ENCODE measurements at regions of chr1 and their contacts with region 1.

Region 1: DNA sequence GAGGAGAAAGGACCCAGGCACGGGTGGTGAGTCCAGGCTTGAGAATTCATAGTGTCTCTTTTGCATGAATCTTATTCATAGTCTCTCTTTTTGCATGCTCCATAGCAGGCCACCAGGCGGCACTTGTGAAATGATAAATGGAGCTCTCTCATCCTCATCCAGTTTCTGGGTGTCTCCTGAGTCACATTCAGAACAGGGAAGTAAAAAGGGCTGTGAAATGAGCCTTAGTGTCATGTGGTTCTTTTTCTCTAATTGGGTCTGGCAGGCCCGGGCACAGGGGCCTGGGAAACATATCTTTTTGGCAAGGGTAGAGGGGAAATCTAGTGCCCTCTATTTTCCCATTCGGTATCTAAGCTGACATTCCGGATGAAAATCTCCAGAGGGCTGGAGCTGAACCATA is 19.1 kb upstream of the NCF2 start:
- DNase-seq: no peak
- ATAC-seq: peak; percentile 62
- H3K4me3 ChIP-seq: no peak overlapping the region
- H3K27ac ChIP-seq: peak overlapping the region; percentile 53
- H3K4me1 ChIP-seq: peaks cover 46% of the 10 kb centered on the region
- H3K27me3 ChIP-seq: no peaks in the 10 kb centered on the region
- CTCF ChIP-seq: peak; percentile 69 to 76 (median 72)
- EP300 ChIP-seq: peak in 1 of 2 experiments; percentile 57; a peak in 1 of 4 replicates
- POLR2A ChIP-seq: no peak
- RAD21 ChIP-seq: peak; percentile 70

Region 2: DNA sequence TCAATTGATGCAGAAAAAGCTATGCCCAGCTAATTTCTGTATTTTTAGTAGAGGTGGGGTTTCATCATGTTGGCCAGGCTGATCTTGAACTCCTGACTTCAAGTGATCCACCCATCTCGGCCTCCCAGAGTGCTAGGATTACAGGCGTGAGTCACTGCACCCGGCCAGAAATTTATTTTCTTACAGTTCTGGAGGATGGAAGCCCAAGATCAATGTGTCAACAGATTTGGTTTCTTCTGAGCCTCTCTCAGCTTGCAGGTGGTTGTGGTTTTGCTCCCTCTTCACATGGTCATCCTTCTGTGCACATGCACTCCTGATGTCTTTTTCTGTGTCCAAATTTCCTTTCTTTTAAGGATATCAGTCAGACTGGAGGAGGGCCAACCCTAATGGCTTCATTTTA is 691.9 kb before region 1 on chr1:
- CTCF ChIA-PET with region 1: no interaction called
- POLR2A ChIA-PET with region 1: no interaction called
- RAD21 ChIA-PET with region 1: no interaction called
- SMC1A ChIA-PET with region 1: no interaction called
- in situ Hi-C with region 1: no loop called
- intact Hi-C with region 1: no loop called
- DNase-seq: no peak
- ATAC-seq: no peak
- H3K4me3 ChIP-seq: no peak overlapping the region
- H3K27ac ChIP-seq: no peak overlapping the region
- H3K4me1 ChIP-seq: no peaks in the 10 kb centered on the region
- H3K27me3 ChIP-seq: no peaks in the 10 kb centered on the region
- CTCF ChIP-seq: no peak
- EP300 ChIP-seq: no peak
- POLR2A ChIP-seq: no peak
- RAD21 ChIP-seq: no peak

Region 3: GRCh38 chr1:183471743-183472487 is 137.4 kb before region 1 on chr1:
- CTCF ChIA-PET with region 1: interaction called, 5 read pairs
- POLR2A ChIA-PET with region 1: interaction called, 5 read pairs
- RAD21 ChIA-PET with region 1: interaction called, 8 read pairs
- SMC1A ChIA-PET with region 1: interaction called, 6 read pairs
- in situ Hi-C with region 1: no loop called
- intact Hi-C with region 1: loop called (anchors 5 kb)
- DNase-seq: peak; percentile 90
- ATAC-seq: peak; percentile 69
- H3K4me3 ChIP-seq: peak overlapping the region; percentile 87
- H3K27ac ChIP-seq: peak overlapping the region; percentile 99
- H3K4me1 ChIP-seq: peaks cover 8% of the 10 kb centered on the region
- H3K27me3 ChIP-seq: no peaks in the 10 kb centered on the region
- CTCF ChIP-seq: peak in 2 of 3 experiments; percentile 21 to 38; a peak in 3 of 6 replicates
- EP300 ChIP-seq: no peak
- POLR2A ChIP-seq: peak; percentile 56
- RAD21 ChIP-seq: no peak

Region 4: GRCh38 chr1:183590244-183591191 is 18.8 kb before region 1 on chr1 and contains the start of gene NCF2:
- CTCF ChIA-PET with region 1: interaction called, 152 read pairs
- POLR2A ChIA-PET with region 1: interaction called, 199 read pairs
- RAD21 ChIA-PET with region 1: interaction called, 188 read pairs
- SMC1A ChIA-PET with region 1: interaction called, 363 read pairs
- in situ Hi-C with region 1: no loop called
- intact Hi-C with region 1: loop called (anchors 1 kb)
- DNase-seq: peak; percentile 96
- ATAC-seq: peak; percentile 79
- H3K4me3 ChIP-seq: peak within 1 kb of the TSS; percentile 73
- H3K27ac ChIP-seq: peak within 1 kb of the TSS; percentile 95
- H3K4me1 ChIP-seq: peaks cover 48% of the 10 kb centered on the region
- H3K27me3 ChIP-seq: no peaks in the 10 kb centered on the region
- CTCF ChIP-seq: no peak
- EP300 ChIP-seq: peak; percentile 74 to 93
- POLR2A ChIP-seq: peak; percentile 64
- RAD21 ChIP-seq: peak; percentile 46; the same call in 1 of the 2 replicates
- polyA plus RNA-seq, gene NCF2: 31.4 to 61.2 TPM

Region 5: DNA sequence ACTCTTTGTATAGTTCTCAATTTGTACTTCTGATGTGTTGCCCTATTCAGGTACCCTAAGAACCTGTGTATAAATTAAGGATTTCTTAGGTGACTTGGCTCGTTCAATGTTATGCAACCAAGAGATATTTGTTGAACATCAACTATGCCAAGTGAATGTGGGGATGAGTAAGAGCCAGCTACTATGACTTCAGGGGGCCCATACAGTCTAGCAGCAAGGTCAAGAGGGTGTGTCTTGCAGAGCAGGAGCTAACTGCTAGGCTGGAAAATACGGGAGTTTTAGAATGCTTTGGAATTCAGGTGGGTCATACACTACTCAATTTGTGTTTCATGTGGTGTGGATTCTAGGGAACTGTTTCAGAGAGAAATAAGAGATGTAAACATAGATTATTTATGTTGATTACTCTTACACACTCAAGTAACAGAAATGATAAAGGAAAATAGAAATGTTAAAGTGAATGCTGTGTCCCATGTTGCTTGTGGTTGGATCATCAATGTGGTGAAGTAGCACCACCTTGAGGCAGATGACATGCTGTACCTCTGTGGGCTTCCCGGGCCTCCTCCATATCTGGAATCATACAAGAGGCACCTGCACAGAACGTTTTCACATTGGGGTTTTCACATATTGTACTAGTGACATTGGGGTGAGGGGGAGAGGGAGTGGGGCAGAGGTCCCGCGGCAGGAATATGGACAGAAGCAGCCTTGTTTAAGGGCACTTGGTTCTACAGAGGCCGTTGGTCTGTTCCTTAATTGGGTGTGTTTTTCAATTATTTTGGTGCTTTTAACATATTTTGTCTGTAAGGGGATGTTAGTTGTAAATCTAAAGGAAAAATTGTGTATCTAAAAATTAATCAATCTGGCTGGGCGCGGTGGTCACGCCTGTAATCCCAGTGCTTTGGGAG is 13.8 kb after region 1 on chr1:
- CTCF ChIA-PET with region 1: interaction called, 25 read pairs
- POLR2A ChIA-PET with region 1: interaction called, 7 read pairs
- RAD21 ChIA-PET with region 1: interaction called, 16 read pairs
- SMC1A ChIA-PET with region 1: interaction called, 30 read pairs
- in situ Hi-C with region 1: no loop called
- intact Hi-C with region 1: loop called (anchors 2 kb)
- DNase-seq: no peak
- ATAC-seq: peak; percentile 94
- H3K4me3 ChIP-seq: no peak overlapping the region
- H3K27ac ChIP-seq: no peak overlapping the region
- H3K4me1 ChIP-seq: no peaks in the 10 kb centered on the region; the same call in 1 of the 2 replicates
- H3K27me3 ChIP-seq: no peaks in the 10 kb centered on the region
- CTCF ChIP-seq: peak; percentile 73 to 77 (median 77); a peak in 5 of 6 replicates
- EP300 ChIP-seq: no peak
- POLR2A ChIP-seq: peak; percentile 25; the same call in 1 of the 2 replicates
- RAD21 ChIP-seq: peak; percentile 86

Region 6: GRCh38 chr1:183635606-183636333 is 26.5 kb after region 1 on chr1 and contains the start of gene ARPC5:
- CTCF ChIA-PET with region 1: interaction called, 10 read pairs
- POLR2A ChIA-PET with region 1: interaction called, 27 read pairs
- RAD21 ChIA-PET with region 1: interaction called, 17 read pairs
- SMC1A ChIA-PET with region 1: interaction called, 17 read pairs
- in situ Hi-C with region 1: no loop called
- intact Hi-C with region 1: loop called (anchors 1 kb)
- DNase-seq: peak; percentile 95
- ATAC-seq: peak; percentile 86
- H3K4me3 ChIP-seq: peak within 1 kb of the TSS; percentile 93
- H3K27ac ChIP-seq: peak within 1 kb of the TSS; percentile 96
- H3K4me1 ChIP-seq: 0 out of 2 replicates have a peak, but pooled peaks cover 3% of the 10 kb centered on the region
- H3K27me3 ChIP-seq: no peaks in the 10 kb centered on the region
- CTCF ChIP-seq: no peak
- EP300 ChIP-seq: no peak
- POLR2A ChIP-seq: peak; percentile 93
- RAD21 ChIP-seq: no peak
- polyA plus RNA-seq, gene ARPC5: 246 to 274 TPM

Region 7: GRCh38 chr1:183676586-183677189 is 67.4 kb after region 1 on chr1:
- CTCF ChIA-PET with region 1: no interaction called
- POLR2A ChIA-PET with region 1: no interaction called
- RAD21 ChIA-PET with region 1: no interaction called
- SMC1A ChIA-PET with region 1: no interaction called
- in situ Hi-C with region 1: no loop called
- intact Hi-C with region 1: no loop called
- DNase-seq: no peak
- ATAC-seq: peak; percentile 31; the same call in 2 of the 3 replicates
- H3K4me3 ChIP-seq: no peak overlapping the region
- H3K27ac ChIP-seq: no peak overlapping the region
- H3K4me1 ChIP-seq: no peaks in the 10 kb centered on the region
- H3K27me3 ChIP-seq: no peaks in the 10 kb centered on the region
- CTCF ChIP-seq: no peak
- EP300 ChIP-seq: no peak
- POLR2A ChIP-seq: no peak
- RAD21 ChIP-seq: no peak